Natural killer cell (primary cell): ENCODE measurements at regions of chr11 and their contacts with region 1.

Region 1: DNA sequence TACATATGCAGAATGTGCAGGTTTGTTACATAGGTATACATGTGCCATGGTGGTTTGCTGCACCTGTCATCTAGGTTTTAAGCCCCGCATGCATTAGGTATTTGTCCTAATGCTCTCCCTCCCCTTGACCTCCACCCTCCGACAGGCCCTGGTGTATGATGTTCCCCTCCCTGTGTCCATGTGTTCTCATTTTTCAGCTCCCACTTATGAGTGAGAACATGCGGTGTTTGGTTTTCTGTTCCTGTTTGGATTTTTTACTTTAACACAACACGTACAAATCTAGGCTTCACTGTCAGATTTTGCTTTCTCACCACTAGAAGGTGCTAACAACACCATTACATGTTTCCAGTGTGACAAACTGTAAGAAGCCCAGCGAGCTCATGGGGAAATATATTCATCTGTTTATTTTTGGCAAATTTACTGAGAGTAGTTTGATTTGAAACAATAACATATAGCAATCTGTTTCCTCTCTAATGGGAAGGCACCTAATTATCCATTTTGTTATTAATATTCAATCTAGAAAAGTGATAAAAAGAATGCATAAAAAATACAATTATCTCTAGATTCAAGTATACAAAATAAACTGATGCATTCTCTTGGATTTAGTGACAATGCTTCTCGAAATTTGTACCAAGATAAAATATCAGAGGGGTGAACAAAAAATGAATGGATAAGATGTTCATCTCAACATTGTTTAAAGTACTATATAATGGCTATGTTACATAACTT is 23.2 kb upstream of the BIRC3 start:
- DNase-seq: peak in 1 of 2 donors; percentile 84
- ATAC-seq: peak; percentile 91 to 97 (median 96)
- H3K4me3 ChIP-seq: peak overlapping the region; percentile 26
- H3K4me3 Mint-ChIP-seq: peak overlapping the region; percentile 89
- H3K27ac ChIP-seq: peak overlapping the region; percentile 48
- H3K27ac Mint-ChIP-seq: peak overlapping the region; percentile 22 to 82
- H3K4me1 ChIP-seq: peaks cover 3% of the 10 kb centered on the region
- H3K4me1 Mint-ChIP-seq: peaks cover 5% of the 10 kb centered on the region in 2 donors
- H3K27me3 ChIP-seq: no peaks in the 10 kb centered on the region
- H3K27me3 Mint-ChIP-seq: no peaks in the 10 kb centered on the region
- CTCF ChIP-seq: peak; percentile 75

Region 2: GRCh38 chr11:102317099-102317767 is 23.2 kb after region 1 on chr11 and contains the start of gene BIRC3:
- intact Hi-C with region 1: loop called (anchors 1 kb)
- DNase-seq: peak; percentile 86 to 99
- ATAC-seq: peak; percentile 88 to 96 (median 90)
- H3K4me3 ChIP-seq: peak within 1 kb of the TSS; percentile 76
- H3K4me3 Mint-ChIP-seq: peak within 1 kb of the TSS; percentile 95
- H3K27ac ChIP-seq: peak within 1 kb of the TSS; percentile 96
- H3K27ac Mint-ChIP-seq: peak within 1 kb of the TSS; percentile 96 to 97
- H3K4me1 ChIP-seq: peaks cover 50% of the 10 kb centered on the region
- H3K4me1 Mint-ChIP-seq: peaks cover 59 to 62% of the 10 kb centered on the region in 2 donors
- H3K27me3 ChIP-seq: no peaks in the 10 kb centered on the region
- H3K27me3 Mint-ChIP-seq: no peaks in the 10 kb centered on the region
- CTCF ChIP-seq: no peak
- total RNA-seq, gene BIRC3: 14.2 to 92.3 (median 20.1) TPM

Region 3: GRCh38 chr11:102367364-102367763 is 73.3 kb after region 1 on chr11:
- intact Hi-C with region 1: no loop called
- DNase-seq: peak in 1 of 2 donors; percentile 56
- ATAC-seq: peak in 2 of 3 donors; percentile 43 to 58
- H3K4me3 ChIP-seq: no peak overlapping the region
- H3K4me3 Mint-ChIP-seq: no peak overlapping the region
- H3K27ac ChIP-seq: no peak overlapping the region
- H3K27ac Mint-ChIP-seq: peak overlapping the region; percentile 52 to 71
- H3K4me1 ChIP-seq: no peaks in the 10 kb centered on the region
- H3K4me1 Mint-ChIP-seq: peaks cover 17 to 33% of the 10 kb centered on the region in 2 donors
- H3K27me3 ChIP-seq: no peaks in the 10 kb centered on the region
- H3K27me3 Mint-ChIP-seq: no peaks in the 10 kb centered on the region
- CTCF ChIP-seq: peak; percentile 14

Region 4: DNA sequence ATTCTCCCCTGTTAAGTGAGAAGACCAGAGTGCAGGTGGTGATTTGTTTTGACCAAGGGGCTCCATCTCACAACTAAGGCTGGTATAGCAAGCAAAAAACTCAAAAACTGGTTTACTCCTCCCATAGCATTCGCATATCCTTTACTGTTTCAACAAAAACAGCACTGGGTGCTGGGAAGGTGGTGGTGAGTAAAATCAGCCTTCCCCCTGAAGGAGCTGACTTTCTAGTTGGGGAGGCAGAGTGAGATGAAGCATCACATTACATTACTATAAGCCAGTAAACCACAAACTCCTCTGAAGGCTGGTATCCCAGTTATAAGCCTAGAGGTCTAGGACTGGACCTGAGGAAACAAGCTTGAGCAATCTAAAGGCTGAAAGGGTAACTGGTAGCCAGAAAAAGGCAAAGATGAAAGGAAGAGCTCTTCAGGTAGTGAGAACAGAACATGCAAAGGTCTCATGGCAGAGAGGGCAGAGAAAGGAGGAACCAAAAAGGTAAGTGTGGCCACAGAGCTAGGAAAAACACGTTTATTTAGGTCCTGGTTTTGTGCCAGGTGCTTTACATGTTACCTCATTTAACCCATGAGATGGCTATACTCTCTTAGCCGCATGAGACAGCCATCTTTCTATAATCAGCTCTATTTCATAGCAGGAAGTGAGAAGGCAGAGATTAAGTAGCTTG is 136.3 kb after region 1 on chr11:
- intact Hi-C with region 1: no loop called
- DNase-seq: peak in 1 of 2 donors; percentile 57
- ATAC-seq: no peak
- H3K4me3 ChIP-seq: no peak overlapping the region
- H3K4me3 Mint-ChIP-seq: no peak overlapping the region
- H3K27ac ChIP-seq: no peak overlapping the region
- H3K27ac Mint-ChIP-seq: peak overlapping the region in 1 of 2 donors; percentile 17
- H3K4me1 ChIP-seq: peaks cover 7% of the 10 kb centered on the region
- H3K4me1 Mint-ChIP-seq: peaks cover 28 to 32% of the 10 kb centered on the region in 2 donors
- H3K27me3 ChIP-seq: no peaks in the 10 kb centered on the region
- H3K27me3 Mint-ChIP-seq: no peaks in the 10 kb centered on the region
- CTCF ChIP-seq: no peak

Region 5: DNA sequence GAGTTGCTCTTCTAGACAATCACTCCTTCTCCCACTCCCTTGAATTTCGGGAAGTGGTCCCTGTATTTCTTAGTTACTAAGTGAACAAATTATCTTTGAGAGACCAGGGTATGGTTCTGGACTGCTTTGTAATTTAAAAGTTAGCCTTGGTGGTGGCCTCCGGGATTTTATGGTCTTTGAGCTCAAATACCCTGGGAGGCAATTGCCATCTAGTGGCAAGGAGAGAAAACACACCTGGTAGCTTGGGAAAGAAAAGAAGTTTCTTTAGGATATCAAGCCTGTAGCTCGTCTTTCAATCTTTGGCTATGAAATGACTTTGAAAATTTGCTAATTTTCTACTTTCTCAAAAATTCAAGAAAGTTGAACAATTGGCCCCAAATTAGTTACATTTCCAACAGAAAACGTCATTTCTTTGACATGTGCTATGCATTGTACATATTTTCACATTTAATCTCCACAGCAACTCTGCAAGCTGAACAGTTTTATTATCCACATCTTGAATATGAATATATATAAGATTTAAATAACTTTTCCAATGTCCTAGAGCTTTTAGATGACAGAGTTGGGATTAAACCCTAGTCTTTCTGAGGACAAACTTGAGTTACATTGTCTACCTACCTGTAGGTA is 372.4 kb after region 1 on chr11:
- intact Hi-C with region 1: loop called (anchors 2 kb)
- DNase-seq: peak in 1 of 2 donors; percentile 61
- ATAC-seq: peak in 1 of 3 donors; percentile 44
- H3K4me3 ChIP-seq: no peak overlapping the region
- H3K4me3 Mint-ChIP-seq: no peak overlapping the region
- H3K27ac ChIP-seq: no peak overlapping the region
- H3K27ac Mint-ChIP-seq: no peak overlapping the region
- H3K4me1 ChIP-seq: no peaks in the 10 kb centered on the region
- H3K4me1 Mint-ChIP-seq: no peaks in the 10 kb centered on the region
- H3K27me3 ChIP-seq: no peaks in the 10 kb centered on the region
- H3K27me3 Mint-ChIP-seq: peaks cover 0 to 6% of the 10 kb centered on the region in 2 donors
- CTCF ChIP-seq: peak; percentile 58